ENCODE measurements at regions of chr15 and their contacts with region 1.

Region 1: DNA sequence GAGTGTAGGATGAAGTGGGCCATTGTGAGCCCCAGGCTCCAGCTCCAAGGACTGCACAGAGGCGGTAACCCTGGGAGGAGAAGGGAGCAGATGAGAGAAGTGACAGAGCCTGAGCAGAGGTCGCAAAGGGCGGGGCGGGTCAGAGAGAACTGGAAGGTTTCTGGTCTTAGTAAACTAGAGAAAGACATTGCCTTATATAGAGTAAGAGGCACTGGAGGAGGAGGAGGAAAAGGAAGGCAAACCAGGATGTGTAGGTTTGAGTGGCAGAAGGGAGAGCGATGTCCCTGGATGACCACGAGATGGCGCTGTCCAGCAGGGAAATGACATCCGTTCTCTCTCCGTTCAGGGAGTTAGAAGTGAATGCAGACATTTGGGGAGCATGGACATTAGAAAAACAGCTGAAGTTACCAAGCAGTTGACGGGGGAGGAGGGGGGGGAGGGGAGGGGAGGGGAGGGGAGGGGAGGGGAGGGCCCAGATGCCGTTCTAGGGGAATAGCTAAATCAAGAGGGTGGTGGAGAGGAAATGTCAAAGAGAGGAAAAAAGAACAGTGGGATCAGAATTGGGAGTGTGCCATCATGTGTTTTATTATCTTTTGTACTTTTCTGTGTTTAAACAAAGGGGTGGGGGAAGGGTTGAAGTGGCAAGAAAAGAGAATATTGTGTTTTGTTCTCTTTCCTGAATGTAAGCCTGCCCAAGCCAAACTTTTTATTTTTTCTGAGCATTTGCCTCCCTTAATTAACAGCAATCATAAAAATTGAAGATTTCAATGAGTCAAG is 48.8 kb downstream of the STARD5 start:
- DNase-seq: peak; percentile 75
- H3K4me3 Mint-ChIP-seq: peak overlapping the region; percentile 0
- H3K27ac Mint-ChIP-seq: peak overlapping the region; percentile 37
- H3K4me1 Mint-ChIP-seq: peaks cover 40% of the 10 kb centered on the region
- H3K27me3 Mint-ChIP-seq: peaks cover under 1% of the 10 kb centered on the region

Region 2: GRCh38 chr15:81286621-81287121 is 11.6 kb after region 1 on chr15:
- intact Hi-C with region 1: no loop called
- DNase-seq: no peak
- H3K4me3 Mint-ChIP-seq: peak overlapping the region; percentile 34
- H3K27ac Mint-ChIP-seq: peak overlapping the region; percentile 64
- H3K4me1 Mint-ChIP-seq: peaks cover 46% of the 10 kb centered on the region
- H3K27me3 Mint-ChIP-seq: no peaks in the 10 kb centered on the region

Region 3: DNA sequence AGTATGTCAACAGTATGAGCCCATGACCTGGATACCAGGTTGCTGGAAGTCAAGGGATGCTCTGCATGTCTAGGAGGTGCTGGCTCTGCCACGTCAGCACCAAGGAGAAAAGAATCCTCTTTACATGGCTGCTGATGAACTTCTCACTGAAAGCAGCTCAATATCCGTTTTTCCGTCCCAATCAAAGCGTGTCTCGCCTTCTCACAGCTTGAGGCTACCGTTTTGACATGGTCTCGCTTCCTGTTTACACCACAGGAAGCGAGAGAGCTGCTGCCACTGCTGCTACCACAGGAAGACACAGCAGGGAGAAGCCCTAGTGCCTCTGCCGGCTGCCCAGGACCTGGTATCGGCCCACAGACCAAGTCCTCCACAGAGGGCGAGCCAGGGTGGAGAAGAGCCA is 21.6 kb after region 1 on chr15:
- intact Hi-C with region 1: loop called (anchors 1 kb)
- DNase-seq: peak; percentile 77
- H3K4me3 Mint-ChIP-seq: peak overlapping the region; percentile 97
- H3K27ac Mint-ChIP-seq: peak overlapping the region; percentile 94
- H3K4me1 Mint-ChIP-seq: peaks cover 95% of the 10 kb centered on the region
- H3K27me3 Mint-ChIP-seq: no peaks in the 10 kb centered on the region

Region 4: DNA sequence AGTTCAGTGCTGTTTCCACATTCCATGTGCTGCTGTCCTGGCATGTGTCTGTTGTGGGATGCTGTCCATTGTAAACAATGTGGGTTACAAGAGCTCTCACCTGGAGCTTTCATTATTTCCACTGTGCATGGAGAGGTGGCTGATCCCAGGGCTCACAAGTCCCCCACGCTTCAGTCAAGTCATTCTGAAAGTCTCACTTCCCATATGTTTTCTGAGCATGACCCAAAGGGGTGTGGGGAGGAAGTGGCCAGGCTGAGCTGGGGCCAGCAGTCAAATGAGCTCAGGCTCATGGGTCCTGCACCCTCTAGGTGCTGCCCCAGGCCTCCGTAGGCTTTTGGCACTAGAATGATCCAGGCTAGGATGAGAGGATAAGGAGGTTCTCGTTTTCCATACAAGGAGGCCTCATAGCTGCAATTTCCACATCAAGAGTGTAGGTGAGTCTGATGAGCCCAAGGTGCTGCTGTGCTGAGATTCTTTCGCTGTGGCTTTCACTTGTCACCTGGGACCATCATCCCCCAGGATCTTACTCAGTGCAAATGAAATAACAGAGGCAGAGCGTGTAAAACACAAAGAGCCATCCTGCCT is 26.8 kb after region 1 on chr15:
- intact Hi-C with region 1: loop called (anchors 1 kb)
- DNase-seq: peak; percentile 50
- H3K4me3 Mint-ChIP-seq: peak overlapping the region; percentile 97
- H3K27ac Mint-ChIP-seq: peak overlapping the region; percentile 87
- H3K4me1 Mint-ChIP-seq: peaks cover 96% of the 10 kb centered on the region
- H3K27me3 Mint-ChIP-seq: no peaks in the 10 kb centered on the region

Region 5: DNA sequence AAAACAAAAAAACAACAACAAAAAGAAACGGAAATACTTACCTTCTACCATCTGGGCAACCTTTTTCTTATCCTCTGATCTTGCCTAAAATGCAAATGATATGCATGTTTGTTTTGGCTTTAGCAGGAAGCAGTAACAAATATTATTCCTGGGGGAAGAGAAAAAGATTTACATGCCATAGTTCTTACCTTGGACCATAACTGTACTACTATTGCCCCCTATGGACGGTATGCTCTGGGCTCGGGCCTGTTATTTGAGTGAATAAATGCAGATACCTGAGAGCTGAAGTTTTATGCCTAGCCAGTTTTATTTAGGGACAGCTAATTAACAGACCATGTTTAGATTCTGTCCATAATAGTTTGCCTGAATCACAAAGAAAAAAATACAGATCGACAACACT is 61.4 kb after region 1 on chr15:
- intact Hi-C with region 1: loop called (anchors 1 kb)
- DNase-seq: no peak
- H3K4me3 Mint-ChIP-seq: no peak overlapping the region
- H3K27ac Mint-ChIP-seq: no peak overlapping the region
- H3K4me1 Mint-ChIP-seq: no peaks in the 10 kb centered on the region
- H3K27me3 Mint-ChIP-seq: peaks cover 9% of the 10 kb centered on the region

Region 6: GRCh38 chr15:81400640-81401236 is 125.6 kb after region 1 on chr15:
- intact Hi-C with region 1: loop called (anchors 1 kb)
- DNase-seq: no peak
- H3K4me3 Mint-ChIP-seq: no peak overlapping the region
- H3K27ac Mint-ChIP-seq: no peak overlapping the region
- H3K4me1 Mint-ChIP-seq: no peaks in the 10 kb centered on the region
- H3K27me3 Mint-ChIP-seq: peaks cover 5% of the 10 kb centered on the region

Region 7: GRCh38 chr15:81480645-81481053 is 205.5 kb after region 1 on chr15:
- intact Hi-C with region 1: loop called (anchors 2 kb)
- DNase-seq: no peak
- H3K4me3 Mint-ChIP-seq: no peak overlapping the region
- H3K27ac Mint-ChIP-seq: no peak overlapping the region
- H3K4me1 Mint-ChIP-seq: no peaks in the 10 kb centered on the region
- H3K27me3 Mint-ChIP-seq: peaks cover 2% of the 10 kb centered on the region